ENCODE measurements at regions of chr2 and their contacts with region 1.

Region 1: DNA sequence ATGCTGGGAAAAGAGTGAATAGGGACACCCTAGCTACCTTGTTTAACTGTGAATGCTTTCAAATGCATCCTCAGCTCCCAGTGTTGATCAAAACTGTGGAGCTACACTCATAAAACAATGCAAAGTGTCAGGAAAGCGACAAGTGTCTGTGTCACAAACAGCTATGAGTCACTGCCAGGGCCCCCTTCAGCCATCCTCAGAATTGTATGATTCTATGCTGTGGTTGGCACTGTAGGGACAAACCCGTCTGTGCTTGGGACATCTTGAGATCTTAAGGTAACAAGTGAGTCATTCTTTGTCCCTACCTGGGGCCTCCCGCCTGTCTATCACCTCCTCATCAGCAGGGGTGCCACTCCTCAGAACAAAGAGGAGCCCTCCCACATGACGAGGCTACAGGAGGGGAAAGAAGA is 42.4 kb downstream of the KLF7 start:
- DNase-seq: peak in 4 of 35 experiments; percentile 11 to 58 (median 29)
- ATAC-seq: peak; percentile 45 to 77 (median 74)
- H3K4me3 ChIP-seq: no peak overlapping the region
- H3K4me3 Mint-ChIP-seq: no peak overlapping the region
- H3K27ac ChIP-seq: no peak overlapping the region
- H3K27ac Mint-ChIP-seq: peak overlapping the region in 1 of 2 donors; percentile 13
- H3K4me1 ChIP-seq: peaks cover 0 to 6% of the 10 kb centered on the region in 2 experiments
- H3K4me1 Mint-ChIP-seq: peaks cover 57 to 67% (median 65%) of the 10 kb centered on the region in 3 donors
- H3K27me3 ChIP-seq: peaks cover 0 to 2% of the 10 kb centered on the region in 2 experiments
- H3K27me3 Mint-ChIP-seq: no peaks in the 10 kb centered on the region

Region 2: GRCh38 chr2:206515580-206515979 is 607.8 kb before region 1 on chr2:
- CTCF ChIA-PET with region 1: no interaction called
- POLR2A ChIA-PET with region 1: interaction called in 1 of 2 experiments, 10 read pairs
- DNase-seq: no peak
- ATAC-seq: no peak
- H3K4me3 ChIP-seq: no peak overlapping the region
- H3K4me3 Mint-ChIP-seq: no peak overlapping the region
- H3K27ac ChIP-seq: no peak overlapping the region
- H3K27ac Mint-ChIP-seq: no peak overlapping the region
- H3K4me1 ChIP-seq: peaks cover 3 to 11% of the 10 kb centered on the region in 2 experiments
- H3K4me1 Mint-ChIP-seq: peaks cover 8 to 15% (median 12%) of the 10 kb centered on the region in 3 donors
- H3K27me3 ChIP-seq: no peaks in the 10 kb centered on the region
- H3K27me3 Mint-ChIP-seq: peaks cover 8 to 11% of the 10 kb centered on the region in 2 donors